Right lobe of liver (tissue), 6 donors: ENCODE measurements at regions of chrX and their contacts with region 1.

Region 1: DNA sequence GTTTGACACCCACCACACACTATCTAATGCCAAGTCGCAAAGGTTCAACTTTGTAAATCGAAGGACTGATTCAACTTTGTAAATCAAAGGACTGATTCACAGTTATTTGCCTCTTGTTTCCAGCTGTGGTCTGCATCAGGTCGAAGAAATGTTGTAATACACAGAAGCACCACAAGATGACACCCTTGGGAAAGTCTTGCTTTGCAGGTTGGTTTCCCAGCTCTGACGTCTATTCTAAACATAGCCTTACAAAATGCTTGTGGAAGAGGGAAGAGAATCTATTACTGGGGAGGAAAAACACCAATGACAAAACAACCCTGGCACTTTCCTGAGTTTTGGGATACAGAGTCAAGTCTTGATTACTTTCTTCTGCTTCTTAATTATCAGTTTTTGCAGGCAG is 35.3 kb downstream of the SUPT20HL1 start:
- DNase-seq: peak in 1 of 3 donors; percentile 40
- ATAC-seq: peak; percentile 94 to 98 (median 96)
- H3K4me3 ChIP-seq: no peak overlapping the region
- H3K27ac ChIP-seq: no peak overlapping the region
- H3K4me1 ChIP-seq: no peaks in the 10 kb centered on the region
- H3K27me3 ChIP-seq: no peaks in the 10 kb centered on the region
- CTCF ChIP-seq: peak; percentile 65 to 97 (median 74)
- POLR2A ChIP-seq: no peak

Region 2: GRCh38 chrX:24506055-24506454 is 110.3 kb after region 1 on chrX:
- intact Hi-C with region 1: loop called in 1 of 2 experiments (anchors 10 kb)
- DNase-seq: no peak
- ATAC-seq: no peak
- H3K4me3 ChIP-seq: no peak overlapping the region
- H3K27ac ChIP-seq: no peak overlapping the region
- H3K4me1 ChIP-seq: no peaks in the 10 kb centered on the region
- H3K27me3 ChIP-seq: no peaks in the 10 kb centered on the region
- CTCF ChIP-seq: no peak
- POLR2A ChIP-seq: no peak